ENCODE measurements at regions of chr2 and their contacts with region 1.

Region 1: DNA sequence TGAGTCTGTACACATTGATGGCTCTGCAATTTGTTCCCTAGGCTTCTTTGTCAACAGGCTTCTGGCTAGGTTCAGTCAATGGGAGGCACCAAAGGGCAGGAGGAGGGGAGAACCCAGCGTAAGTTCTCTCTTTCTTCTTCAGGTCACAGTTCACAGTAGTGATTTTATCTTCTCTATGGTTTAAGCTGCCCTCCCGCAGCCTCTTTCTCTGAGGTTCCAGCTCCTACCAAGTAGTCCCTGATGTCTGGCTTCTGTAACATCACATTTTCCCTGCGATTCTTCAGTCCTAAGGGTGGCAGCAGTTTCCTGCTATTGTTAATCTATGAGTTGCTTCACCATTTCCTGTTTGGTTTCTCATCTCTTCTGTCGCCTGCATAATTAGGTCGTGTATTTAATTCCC is 107.4 kb downstream of the CPO start:
- DNase-seq: peak; percentile 6
- H3K4me3 Mint-ChIP-seq: no peak overlapping the region
- H3K27ac Mint-ChIP-seq: no peak overlapping the region
- H3K4me1 Mint-ChIP-seq: peaks cover 15% of the 10 kb centered on the region
- H3K27me3 Mint-ChIP-seq: peaks cover 2% of the 10 kb centered on the region

Region 2: DNA sequence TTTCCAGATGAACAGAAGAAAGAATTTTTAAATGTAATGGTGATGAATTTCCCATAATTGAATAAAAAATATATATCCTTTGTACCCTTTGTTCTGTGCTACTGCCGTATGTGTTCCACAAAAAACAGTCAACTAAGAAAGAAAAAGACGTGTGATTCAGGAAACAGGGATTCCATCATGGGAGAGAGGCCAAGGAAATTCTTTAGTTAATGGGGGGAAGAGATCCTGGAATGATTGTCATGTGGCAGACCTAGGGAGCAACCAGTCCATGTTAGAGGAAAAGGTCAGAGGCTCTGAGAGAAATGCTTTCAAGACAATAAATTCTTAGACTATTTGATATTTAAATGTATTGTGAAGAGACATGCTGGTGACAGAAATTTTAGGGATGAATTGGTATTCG is 30.8 kb before region 1 on chr2:
- intact Hi-C with region 1: no loop called
- DNase-seq: no peak
- H3K4me3 Mint-ChIP-seq: no peak overlapping the region
- H3K27ac Mint-ChIP-seq: no peak overlapping the region
- H3K4me1 Mint-ChIP-seq: no peaks in the 10 kb centered on the region
- H3K27me3 Mint-ChIP-seq: peaks cover 2% of the 10 kb centered on the region

Region 3: DNA sequence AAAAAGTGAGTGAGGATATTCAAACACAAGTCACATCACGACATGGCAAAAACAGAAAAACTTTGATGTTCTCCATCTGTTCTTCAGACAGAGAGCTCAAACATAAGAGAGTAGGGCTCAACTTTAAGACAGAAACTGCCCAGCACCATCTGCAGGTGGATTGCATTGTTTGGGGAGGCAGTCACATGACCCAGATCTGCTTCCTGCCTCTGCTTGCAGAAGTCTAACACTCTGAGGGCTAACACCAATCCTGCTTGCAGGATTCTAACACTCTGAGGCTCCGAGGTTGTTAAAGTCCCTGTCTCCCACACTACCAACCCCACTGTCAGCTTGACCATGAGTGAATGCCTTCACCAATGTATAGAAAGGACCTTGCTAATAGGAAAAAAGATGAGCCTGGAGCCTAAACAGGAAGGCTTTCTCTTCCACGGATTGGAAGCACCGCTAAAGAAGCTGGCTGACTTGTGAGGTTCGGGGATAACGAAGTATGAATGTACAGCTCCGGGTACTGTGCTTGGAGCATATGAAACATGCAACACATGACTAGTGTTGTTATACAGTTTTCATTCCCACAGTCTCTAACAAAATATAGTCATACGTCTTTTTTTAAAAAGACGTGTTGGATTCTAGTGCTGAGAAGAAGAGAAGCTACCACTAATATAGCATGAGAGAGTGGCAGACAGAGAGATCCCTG is 306.4 kb after region 1 on chr2:
- intact Hi-C with region 1: loop called (anchors 5 kb)
- DNase-seq: peak; percentile 36
- H3K4me3 Mint-ChIP-seq: no peak overlapping the region
- H3K27ac Mint-ChIP-seq: no peak overlapping the region
- H3K4me1 Mint-ChIP-seq: peaks cover 10% of the 10 kb centered on the region
- H3K27me3 Mint-ChIP-seq: peaks cover 2% of the 10 kb centered on the region